ENCODE measurements at regions of chr17 and their contacts with region 1.

Region 1: DNA sequence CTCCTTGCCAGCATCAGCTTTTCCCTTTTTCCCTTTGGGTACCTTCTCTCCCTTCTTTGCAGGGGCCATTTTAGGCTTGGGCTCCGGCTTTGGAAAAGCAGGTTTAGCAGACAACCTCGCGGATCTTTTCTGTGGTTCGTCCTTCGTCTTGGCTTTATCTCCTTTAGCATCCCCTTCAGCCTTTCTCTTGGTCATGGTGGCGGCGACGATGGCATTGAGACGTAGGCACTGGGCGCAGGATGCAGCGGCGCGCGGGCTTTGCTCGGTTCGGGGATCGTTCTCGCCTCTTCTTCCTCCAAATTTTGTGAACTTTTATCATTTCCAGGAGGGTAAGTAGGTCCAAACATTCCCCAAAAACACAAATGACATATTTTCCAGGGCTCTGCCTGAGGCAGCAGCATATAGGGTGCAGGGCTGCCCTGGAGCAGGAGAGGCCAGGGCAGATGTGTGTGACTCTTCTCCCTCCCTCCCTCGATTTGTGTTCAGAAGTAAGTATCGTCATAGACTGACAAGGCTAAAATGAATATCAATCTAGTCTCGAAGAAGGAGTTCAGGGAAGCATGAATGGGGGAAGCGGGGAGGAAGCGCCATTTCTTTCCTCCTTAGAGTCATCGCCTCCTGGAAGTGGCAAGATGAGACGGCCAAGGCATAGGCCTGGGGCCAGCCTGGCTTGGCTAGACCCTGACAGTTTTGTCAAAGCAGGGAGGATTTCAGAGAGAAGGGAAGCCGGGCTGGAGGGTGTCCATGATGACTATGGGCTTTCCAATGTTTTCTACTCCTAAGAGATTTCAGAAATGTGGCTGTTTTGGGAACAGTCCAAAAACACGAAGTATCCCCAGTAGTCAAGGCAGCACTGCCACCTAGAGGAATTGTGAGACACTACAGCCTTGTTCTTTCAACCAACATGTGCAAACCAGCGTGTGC is 13.2 kb downstream of the CHCT1 start:
- DNase-seq: peak; percentile 74 to 91 (median 79)
- H3K4me3 ChIP-seq: no peak overlapping the region
- H3K27ac ChIP-seq: no peak overlapping the region
- H3K4me1 ChIP-seq: peaks cover 0 to 4% of the 10 kb centered on the region in 2 donors
- H3K27me3 ChIP-seq: no peaks in the 10 kb centered on the region
- CTCF ChIP-seq: peak; percentile 89 to 99 (median 97)
- POLR2A ChIP-seq: no peak

Region 2: GRCh38 chr17:60036796-60037612 is 398.5 kb before region 1 on chr17:
- intact Hi-C with region 1: loop called in 1 of 2 experiments (anchors 5 kb)
- DNase-seq: peak; percentile 52 to 80 (median 72)
- H3K4me3 ChIP-seq: no peak overlapping the region
- H3K27ac ChIP-seq: no peak overlapping the region
- H3K4me1 ChIP-seq: peaks cover 0 to 11% of the 10 kb centered on the region in 2 donors
- H3K27me3 ChIP-seq: no peaks in the 10 kb centered on the region
- CTCF ChIP-seq: peak; percentile 66 to 91 (median 76)
- POLR2A ChIP-seq: no peak

Region 3: DNA sequence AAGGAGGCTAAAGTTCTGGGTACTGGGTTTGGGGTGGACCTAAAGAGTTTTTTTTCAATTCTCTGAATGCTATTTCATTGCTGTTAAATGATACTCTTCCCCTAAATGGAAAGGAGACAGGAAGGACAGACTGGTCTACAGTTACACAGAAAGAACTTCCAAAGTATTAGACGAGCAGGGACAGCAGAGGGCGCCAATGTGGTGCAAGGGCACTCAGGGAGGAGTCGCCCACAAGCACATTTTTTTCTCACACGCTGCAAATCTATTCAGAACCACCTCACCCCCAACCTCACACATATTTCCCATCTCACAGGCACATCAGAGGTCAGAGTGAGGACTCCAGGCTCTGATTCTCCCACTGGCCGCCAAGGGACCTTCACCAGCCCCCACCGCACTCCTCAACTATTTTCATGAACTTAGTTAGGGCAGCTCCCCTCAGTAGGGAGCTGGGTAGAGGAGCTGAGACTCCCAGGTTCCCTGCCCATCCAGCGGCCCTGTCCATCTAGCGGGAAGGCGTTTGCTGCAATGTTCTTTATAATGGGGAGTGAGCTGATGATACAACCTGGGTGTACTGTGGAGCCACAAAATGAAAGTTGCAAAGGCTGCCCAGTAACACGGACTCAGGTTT is 292.5 kb before region 1 on chr17:
- intact Hi-C with region 1: loop called (anchors 10 kb)
- DNase-seq: peak; percentile 84 to 96 (median 91)
- H3K4me3 ChIP-seq: peak overlapping the region in 1 of 4 donors; percentile 1
- H3K27ac ChIP-seq: no peak overlapping the region
- H3K4me1 ChIP-seq: peaks cover 4 to 32% of the 10 kb centered on the region in 2 donors
- H3K27me3 ChIP-seq: peaks cover 38% of the 10 kb centered on the region
- CTCF ChIP-seq: peak; percentile 58 to 83 (median 70)
- POLR2A ChIP-seq: no peak

Region 4: DNA sequence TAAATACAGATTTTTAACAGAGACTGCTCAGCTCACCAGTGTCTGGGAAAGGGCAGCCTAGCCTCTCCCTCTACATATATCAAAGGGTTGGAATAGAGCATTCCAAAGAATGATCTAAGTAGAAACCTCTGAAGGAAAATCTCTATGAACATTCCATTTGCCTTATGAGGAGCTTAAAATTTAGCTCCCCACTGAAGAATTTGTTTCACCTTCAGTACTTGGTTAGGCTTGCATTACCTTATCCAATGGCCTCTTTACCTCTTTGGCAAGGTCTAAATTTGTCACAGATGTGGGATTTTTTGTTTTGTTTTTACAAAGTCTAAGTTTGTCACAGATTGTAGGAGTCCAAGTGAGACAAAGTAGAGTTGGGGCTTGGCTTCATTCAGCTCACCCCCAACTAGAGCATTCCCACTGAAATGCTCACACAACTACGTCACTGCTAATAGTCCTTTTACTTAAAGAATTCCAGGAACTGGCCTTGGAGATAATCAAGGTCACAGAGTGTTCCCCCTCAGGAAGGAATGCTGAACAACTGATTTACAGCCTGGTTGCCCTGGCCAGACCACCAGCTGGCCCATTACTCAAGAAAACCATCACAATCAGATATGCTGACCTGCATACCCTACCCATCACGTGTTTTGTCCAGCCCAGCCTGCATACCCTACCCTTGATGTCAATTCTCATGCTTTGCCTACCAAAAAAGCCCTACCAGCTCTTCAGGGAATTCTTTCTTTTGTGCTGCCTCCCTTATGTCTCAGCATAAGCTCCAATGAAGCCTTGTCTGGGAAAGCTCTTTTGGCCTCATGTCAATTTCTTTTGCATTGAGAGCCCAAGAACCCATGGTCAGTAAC is 137.9 kb after region 1 on chr17:
- intact Hi-C with region 1: no loop called
- DNase-seq: peak in 2 of 7 donors; percentile 28 to 52
- H3K4me3 ChIP-seq: no peak overlapping the region
- H3K27ac ChIP-seq: peak overlapping the region in 2 of 5 donors; percentile 42 to 44
- H3K4me1 ChIP-seq: peaks cover 0 to 17% of the 10 kb centered on the region in 2 donors
- H3K27me3 ChIP-seq: no peaks in the 10 kb centered on the region
- CTCF ChIP-seq: no peak
- POLR2A ChIP-seq: no peak

Measured in adrenal gland (tissue), 19 donors.